ENCODE measurements at regions of chr2 and their contacts with region 1.

Region 1: GRCh38 chr2:218482651-218483050 is 63.7 kb downstream of the VIL1 start:
- DNase-seq: no peak
- ATAC-seq: no peak

Region 2: DNA sequence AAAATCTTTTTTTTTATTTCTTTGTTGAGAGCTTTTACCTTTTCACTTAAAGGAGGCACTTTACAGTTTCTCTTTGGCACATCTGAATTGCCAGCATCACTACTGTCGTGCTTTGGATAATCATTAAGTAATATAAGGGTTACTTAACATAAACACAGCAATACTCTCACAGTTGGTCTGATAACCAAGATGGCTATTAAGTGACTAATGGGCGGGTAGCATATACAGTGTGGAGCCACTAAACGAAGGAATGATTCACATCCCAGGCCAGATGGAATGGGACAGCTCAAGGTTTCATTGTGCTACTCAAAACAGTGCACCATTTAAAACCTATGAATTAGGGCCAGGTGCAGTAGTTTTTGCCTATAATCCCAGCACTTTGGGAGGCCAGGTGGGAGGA is 57.4 kb after region 1 on chr2:
- intact Hi-C with region 1: loop called in 1 of 2 experiments (anchors 10 kb)
- DNase-seq: no peak
- ATAC-seq: no peak

Region 3: GRCh38 chr2:218557941-218558340 is 75.3 kb after region 1 on chr2:
- intact Hi-C with region 1: no loop called
- DNase-seq: no peak
- ATAC-seq: no peak

Measured in left cardiac atrium (tissue), 4 donors.